GM10248 (cell line): ENCODE measurements at regions of chr6 and their contacts with region 1.

Region 1: GRCh38 chr6:84220809-84221409 is 6.5 kb downstream of the CEP162 start:
- DNase-seq: no peak
- CTCF ChIP-seq: peak; percentile 23

Region 2: DNA sequence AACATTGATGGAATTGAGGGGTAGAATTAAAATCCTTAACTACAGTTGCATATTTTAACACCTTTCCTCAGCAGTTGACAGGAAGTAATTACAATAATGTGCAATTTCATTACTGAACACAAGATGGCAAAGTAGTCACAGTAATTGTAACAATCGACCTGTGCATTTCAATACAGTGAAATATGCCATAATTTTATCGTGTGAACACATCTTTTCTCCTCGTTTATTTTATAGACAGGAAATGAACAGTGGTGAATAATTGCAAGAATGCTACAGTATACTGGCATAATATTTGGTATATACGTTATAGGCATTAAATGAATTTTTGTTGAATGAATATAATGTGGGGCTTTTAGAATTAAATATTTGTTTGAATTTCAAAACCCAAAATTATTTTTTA is 336.4 kb before region 1 on chr6:
- CTCF ChIA-PET with region 1: interaction called, 13 read pairs
- POLR2A ChIA-PET with region 1: no interaction called
- DNase-seq: peak; percentile 35
- CTCF ChIP-seq: peak; percentile 67

Region 3: DNA sequence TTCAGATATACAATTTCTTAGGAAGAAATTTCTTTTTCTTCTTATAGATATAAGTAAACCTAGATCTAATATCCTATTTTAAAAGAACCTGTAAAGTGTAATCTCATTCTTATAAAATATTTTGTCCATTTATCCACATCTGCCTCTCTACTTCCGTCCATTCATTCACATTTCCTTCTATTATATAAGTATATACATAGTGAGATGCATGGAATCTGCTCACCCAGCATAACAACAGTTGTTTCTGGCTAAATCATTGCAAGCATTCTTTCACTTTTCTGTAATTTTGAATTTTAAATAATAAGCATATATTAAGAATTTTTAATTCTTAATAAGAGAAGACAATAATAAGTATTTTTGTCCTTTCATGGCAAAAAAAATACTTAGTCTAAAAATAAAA is 38.9 kb before region 1 on chr6:
- CTCF ChIA-PET with region 1: no interaction called
- POLR2A ChIA-PET with region 1: no interaction called
- DNase-seq: no peak
- CTCF ChIP-seq: no peak

Region 4: DNA sequence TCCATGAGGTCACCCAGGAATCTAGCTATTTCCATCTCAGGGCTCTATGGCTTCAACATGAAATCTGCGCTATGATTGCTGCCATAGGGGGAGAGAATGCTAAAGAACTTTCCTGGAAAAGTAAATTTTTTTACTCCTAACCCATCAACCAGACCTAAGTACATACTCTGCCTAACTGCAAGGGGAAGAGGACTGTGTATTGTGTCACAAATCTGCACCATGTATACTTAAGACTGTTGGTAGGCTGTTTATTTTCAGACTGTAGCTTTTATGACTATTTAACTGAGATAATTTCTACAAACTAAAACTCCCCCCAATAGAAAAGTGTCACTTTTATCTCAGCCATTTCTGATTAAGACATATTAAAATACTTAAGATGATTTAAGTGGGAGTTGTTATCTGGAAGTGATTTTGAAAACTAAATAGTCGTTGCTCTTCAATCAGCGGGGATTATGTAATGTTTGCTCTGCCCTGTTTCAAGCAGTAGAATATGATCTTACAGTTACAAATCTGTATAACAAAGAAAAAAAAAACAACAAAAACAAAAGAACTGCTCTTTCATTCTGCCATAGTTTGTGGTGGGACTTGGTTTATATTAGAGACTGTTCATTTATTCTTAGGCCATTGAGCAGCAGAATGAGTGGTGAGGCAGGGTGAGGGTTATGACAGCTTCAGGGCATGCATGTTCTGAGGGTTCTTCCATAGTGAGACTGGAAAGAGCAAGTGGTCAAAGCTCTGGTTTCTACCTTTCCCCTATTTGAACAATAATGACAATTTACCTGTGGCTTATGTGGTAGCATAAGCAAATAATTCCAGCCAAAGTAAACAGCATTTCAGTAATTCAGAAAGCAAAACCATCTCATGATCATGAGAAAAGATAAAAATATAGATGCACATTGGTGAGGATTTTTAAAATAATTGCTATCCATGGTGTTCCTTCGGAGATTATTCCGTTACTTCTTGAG is 132.8 kb after region 1 on chr6:
- CTCF ChIA-PET with region 1: no interaction called
- POLR2A ChIA-PET with region 1: no interaction called
- DNase-seq: no peak
- CTCF ChIP-seq: no peak